ENCODE measurements at regions of chr1 and their contacts with region 1.

Region 1: GRCh38 chr1:165392634-165393571 is 36.4 kb upstream of the LMX1A start:
- DNase-seq: peak; percentile 55 to 96 (median 78)

Region 2: DNA sequence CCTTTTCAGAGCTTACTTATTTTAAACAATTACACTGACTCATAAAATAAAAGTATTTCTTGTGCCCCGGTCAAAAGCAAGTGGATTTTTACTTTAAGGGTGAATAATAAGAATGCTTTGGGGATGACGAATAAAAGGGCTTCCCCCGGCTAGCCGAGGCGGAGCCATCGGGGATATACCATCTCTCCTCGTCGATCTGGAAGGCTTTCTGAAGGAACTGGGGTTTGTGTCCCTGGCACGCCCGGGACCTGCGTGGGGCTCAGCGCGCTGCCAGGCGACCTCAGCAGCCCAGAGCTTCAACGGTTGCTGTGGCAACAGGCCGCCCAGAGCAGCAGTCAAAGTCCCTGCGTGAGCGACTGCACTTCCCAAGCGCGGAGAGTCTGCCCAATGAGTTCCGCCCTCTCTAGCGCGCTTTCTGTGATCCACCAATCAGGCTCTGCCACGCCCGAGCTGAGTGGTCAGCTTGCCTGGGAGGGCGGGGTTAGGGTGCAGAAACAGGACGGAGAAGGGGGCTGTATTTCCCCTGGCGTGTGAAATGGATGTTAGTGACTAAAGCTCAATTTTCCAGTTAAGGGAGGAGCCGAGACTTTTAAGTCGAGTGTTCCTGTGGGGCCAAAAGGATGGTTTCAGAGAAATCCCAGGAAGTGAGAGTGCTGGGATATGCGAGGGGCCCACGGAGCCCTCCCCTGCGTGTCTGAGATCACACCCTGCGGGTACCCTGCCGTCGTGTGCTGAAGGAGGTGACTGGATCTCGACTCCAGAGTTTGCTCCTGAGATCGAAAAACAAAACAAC is 205.2 kb after region 1 on chr1:
- intact Hi-C with region 1: loop called (anchors 1 kb)
- DNase-seq: peak; percentile 91 to 99 (median 97)

Measured in posterior cingulate gyrus (tissue), 11 donors.